HepG2 (cell line): ENCODE measurements at regions of chr21 and their contacts with region 1.

Region 1: GRCh38 chr21:33324291-33325221 is at the start of gene IFNAR1:
- DNase-seq: peak; percentile 92
- ATAC-seq: peak; percentile 90
- H3K4me3 ChIP-seq: peak within 1 kb of the TSS; percentile 60 to 89 (median 86)
- H3K27ac ChIP-seq: peak within 1 kb of the TSS; percentile 89
- H3K4me1 ChIP-seq: peaks cover 27% of the 10 kb centered on the region
- H3K27me3 ChIP-seq: no peaks in the 10 kb centered on the region
- CTCF ChIP-seq: peak; percentile 39
- EP300 ChIP-seq: no peak
- POLR2A ChIP-seq: peak; percentile 70 to 87
- RAD21 ChIP-seq: no peak
- total RNA-seq, gene IFNAR1: 9.3 and 11.2 TPM in 2 replicates

Region 2: GRCh38 chr21:33229784-33230544 is 94.6 kb before region 1 on chr21 and contains the start of gene IFNAR2:
- CTCF ChIA-PET with region 1: no interaction called
- POLR2A ChIA-PET with region 1: interaction called, 16 read pairs
- in situ Hi-C with region 1: no loop called
- intact Hi-C with region 1: no loop called
- DNase-seq: peak; percentile 40
- ATAC-seq: peak; percentile 80
- H3K4me3 ChIP-seq: peak within 1 kb of the TSS; percentile 87 to 97 (median 89)
- H3K27ac ChIP-seq: peak within 1 kb of the TSS; percentile 91
- H3K4me1 ChIP-seq: peaks cover 71% of the 10 kb centered on the region
- H3K27me3 ChIP-seq: no peaks in the 10 kb centered on the region; a peak in 1 of 5 replicates
- CTCF ChIP-seq: no peak
- EP300 ChIP-seq: no peak
- POLR2A ChIP-seq: peak; percentile 39 to 56; a peak in 2 of 4 replicates
- RAD21 ChIP-seq: 0 out of 2 replicates have a peak, but pooled peaks have one; percentile 7
- total RNA-seq, gene IFNAR2: 5.1 TPM in 2 replicates

Region 3: GRCh38 chr21:33266050-33266788 is 58.3 kb before region 1 on chr21 and contains the start of gene IL10RB:
- CTCF ChIA-PET with region 1: no interaction called
- POLR2A ChIA-PET with region 1: interaction called, 15 read pairs
- in situ Hi-C with region 1: no loop called
- intact Hi-C with region 1: no loop called
- DNase-seq: peak; percentile 29
- ATAC-seq: peak; percentile 85
- H3K4me3 ChIP-seq: peak within 1 kb of the TSS; percentile 85 to 89 (median 85)
- H3K27ac ChIP-seq: peak within 1 kb of the TSS; percentile 62
- H3K4me1 ChIP-seq: peaks cover 50% of the 10 kb centered on the region
- H3K27me3 ChIP-seq: no peaks in the 10 kb centered on the region; a peak in 1 of 5 replicates
- CTCF ChIP-seq: peak; percentile 22; the same call in 1 of the 2 replicates
- EP300 ChIP-seq: no peak
- POLR2A ChIP-seq: peak in 1 of 2 experiments; percentile 68; a peak in 2 of 4 replicates
- RAD21 ChIP-seq: no peak
- total RNA-seq, gene IL10RB: 10.7 and 17.4 TPM in 2 replicates

Region 4: DNA sequence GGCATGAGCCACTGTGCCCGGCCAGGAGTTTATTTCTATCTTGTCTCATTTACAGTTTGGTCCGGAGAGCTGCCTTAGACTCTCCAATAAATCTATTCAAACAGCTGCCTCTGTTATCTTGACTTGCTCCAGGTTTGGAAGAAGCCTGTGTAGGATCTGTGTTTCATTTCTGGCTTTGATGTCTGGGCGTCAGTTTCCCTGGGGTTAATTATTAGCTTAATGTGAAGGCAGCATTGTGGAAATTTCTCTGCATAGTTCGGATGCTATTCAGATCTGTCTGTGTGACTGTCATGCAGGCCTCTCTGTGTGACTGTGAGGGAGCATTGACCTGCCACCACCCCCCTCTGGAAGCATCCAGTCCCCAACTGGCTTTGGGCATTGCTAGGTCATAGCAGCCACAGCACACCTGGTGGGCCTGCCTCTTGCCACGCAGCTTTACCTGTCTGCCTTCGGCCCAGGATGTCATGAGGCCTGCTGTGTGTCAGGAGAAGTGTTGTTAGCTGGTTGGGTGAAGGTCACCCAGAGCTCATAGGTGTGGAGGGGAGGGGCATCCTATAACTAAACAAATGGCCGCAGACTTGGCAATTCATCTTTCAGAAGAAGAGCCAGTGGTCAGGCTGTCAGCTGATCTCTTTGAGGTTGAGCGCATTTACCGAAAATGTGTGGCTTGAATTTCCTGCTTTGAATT is 88.4 kb after region 1 on chr21:
- CTCF ChIA-PET with region 1: no interaction called
- POLR2A ChIA-PET with region 1: interaction called, 18 read pairs
- in situ Hi-C with region 1: no loop called
- intact Hi-C with region 1: no loop called
- DNase-seq: peak; percentile 98
- ATAC-seq: peak; percentile 96
- H3K4me3 ChIP-seq: peak overlapping the region; percentile 1 to 51 (median 37); a peak in 5 of 6 replicates
- H3K27ac ChIP-seq: peak overlapping the region; percentile 96
- H3K4me1 ChIP-seq: peaks cover 79% of the 10 kb centered on the region
- H3K27me3 ChIP-seq: no peaks in the 10 kb centered on the region
- CTCF ChIP-seq: no peak
- EP300 ChIP-seq: peak in 1 of 2 experiments; percentile 71; a peak in 2 of 4 replicates
- POLR2A ChIP-seq: peak; percentile 59 to 62
- RAD21 ChIP-seq: no peak; the same call in 1 of the 2 replicates

Region 5: DNA sequence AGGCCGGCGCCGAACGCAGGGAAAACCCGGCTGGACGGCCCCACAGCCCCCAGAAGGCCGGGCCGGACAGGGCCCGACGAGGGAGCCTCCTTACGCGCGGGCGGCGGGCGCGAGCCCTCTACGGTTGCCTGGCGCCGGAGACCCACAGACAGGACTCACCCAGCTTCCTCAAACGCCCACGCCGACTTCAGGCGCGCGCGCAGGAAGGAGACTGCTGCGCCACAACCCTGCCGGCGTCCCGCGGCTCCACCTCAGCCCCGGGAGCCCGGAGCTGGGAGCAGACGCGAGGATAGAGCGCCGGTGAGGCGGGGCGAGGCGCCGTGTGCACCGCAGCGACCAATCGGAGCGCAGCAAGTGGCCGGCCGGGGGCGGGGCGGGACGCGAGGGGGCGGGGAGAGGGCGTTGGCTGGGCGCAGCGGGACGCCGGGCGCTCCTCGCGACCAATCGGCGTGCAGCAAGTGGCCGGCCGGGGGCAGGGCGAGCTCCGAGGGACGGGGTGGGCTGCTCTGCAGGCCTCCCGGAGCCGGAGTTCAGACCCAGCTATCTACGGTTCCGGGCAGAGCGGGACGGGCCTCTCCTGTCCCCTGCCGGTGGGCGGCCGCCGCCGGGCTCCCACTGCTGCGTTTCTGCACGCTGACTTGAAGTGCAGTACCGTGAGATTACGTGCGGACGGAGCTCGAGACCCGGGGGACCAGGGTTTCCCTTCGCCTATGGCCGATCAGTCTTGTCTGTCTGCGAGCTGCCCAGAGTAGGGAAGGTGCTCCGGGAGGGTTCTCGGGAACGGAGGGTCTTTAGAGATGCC is 155.3 kb after region 1 on chr21 and contains the start of gene TMEM50B:
- CTCF ChIA-PET with region 1: no interaction called
- POLR2A ChIA-PET with region 1: interaction called, 21 read pairs
- in situ Hi-C with region 1: no loop called
- intact Hi-C with region 1: no loop called
- DNase-seq: peak; percentile 90
- ATAC-seq: peak; percentile 95
- H3K4me3 ChIP-seq: peak within 1 kb of the TSS; percentile 72 to 91 (median 85)
- H3K27ac ChIP-seq: peak within 1 kb of the TSS; percentile 92
- H3K4me1 ChIP-seq: peaks cover 23% of the 10 kb centered on the region
- H3K27me3 ChIP-seq: no peaks in the 10 kb centered on the region; a peak in 1 of 5 replicates
- CTCF ChIP-seq: peak; percentile 78
- EP300 ChIP-seq: 0 out of 4 replicates have a peak, but pooled peaks of 1 of the 2 experiments have one; percentile 14
- POLR2A ChIP-seq: peak; percentile 89 to 90
- RAD21 ChIP-seq: peak; percentile 83
- total RNA-seq, gene TMEM50B: 13.9 and 29.9 TPM in 2 replicates